ENCODE measurements at regions of chr15 and their contacts with region 1.

Region 1: DNA sequence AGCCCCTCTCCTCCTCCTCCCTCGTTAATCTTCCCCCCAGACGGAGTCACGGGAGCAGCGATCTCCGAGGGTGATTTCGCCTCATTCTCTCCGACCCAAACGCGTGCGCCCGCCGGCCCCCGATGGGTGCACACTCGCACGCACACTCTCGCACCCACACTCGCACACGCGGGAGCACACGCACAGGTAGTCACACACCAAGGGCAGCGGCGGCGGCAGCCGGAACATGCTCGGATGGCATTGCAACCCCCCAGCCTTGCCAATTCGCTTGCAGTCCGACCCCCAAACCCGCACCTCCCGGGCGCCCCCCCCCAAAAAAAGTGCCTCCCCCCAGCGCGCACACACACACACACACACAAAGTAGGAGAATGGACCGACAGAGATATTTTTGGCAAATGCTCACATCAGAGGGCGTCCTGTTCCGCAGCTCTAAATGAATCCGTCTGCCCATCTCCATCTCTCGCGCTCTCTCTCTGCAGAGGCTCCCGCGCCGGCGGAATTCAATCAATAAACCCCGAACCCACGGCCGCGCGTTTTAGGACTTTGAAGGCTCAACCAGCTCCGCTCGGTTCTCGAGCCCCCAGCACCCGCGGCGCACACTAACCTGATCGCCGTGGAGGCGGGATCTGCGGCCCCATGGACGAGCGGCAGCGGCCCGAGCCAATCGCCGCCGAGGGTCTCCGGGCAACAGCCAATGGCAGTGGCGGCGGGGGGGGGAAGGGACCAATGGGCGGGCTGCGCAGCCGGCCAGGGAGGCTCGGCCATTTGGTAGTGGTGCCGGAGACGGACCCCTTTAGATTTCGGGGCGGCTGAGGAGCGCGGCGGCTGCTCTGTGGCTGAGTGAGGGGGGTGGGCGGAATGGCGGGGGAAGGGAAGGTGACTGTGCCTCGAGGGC is at the start of gene ANP32A:
- DNase-seq: peak; percentile 96 to 99 (median 97)
- ATAC-seq: peak; percentile 62
- H3K4me3 ChIP-seq: peak within 1 kb of the TSS; percentile 81 to 98
- H3K4me3 Mint-ChIP-seq: peak within 1 kb of the TSS; percentile 95
- H3K27ac ChIP-seq: peak within 1 kb of the TSS; percentile 59 to 74
- H3K27ac Mint-ChIP-seq: peak within 1 kb of the TSS; percentile 97
- H3K4me1 ChIP-seq: peaks cover 28% of the 10 kb centered on the region
- H3K4me1 Mint-ChIP-seq: peaks cover 31% of the 10 kb centered on the region
- H3K27me3 ChIP-seq: no peaks in the 10 kb centered on the region
- H3K27me3 Mint-ChIP-seq: no peaks in the 10 kb centered on the region
- CTCF ChIP-seq: no peak
- total RNA-seq, gene ANP32A: 47.6 to 51.9 TPM

Region 2: GRCh38 chr15:67542420-67543347 is 1277.9 kb before region 1 on chr15 and contains the start of gene MAP2K5:
- CTCF ChIA-PET with region 1: no interaction called
- POLR2A ChIA-PET with region 1: no interaction called
- intact Hi-C with region 1: loop called in 1 of 2 experiments (anchors 5 kb)
- DNase-seq: peak; percentile 57 to 91 (median 82)
- ATAC-seq: peak; percentile 71
- H3K4me3 ChIP-seq: peak within 1 kb of the TSS; percentile 91 to 93
- H3K4me3 Mint-ChIP-seq: peak within 1 kb of the TSS; percentile 97
- H3K27ac ChIP-seq: peak within 1 kb of the TSS; percentile 81 to 86
- H3K27ac Mint-ChIP-seq: peak within 1 kb of the TSS; percentile 99
- H3K4me1 ChIP-seq: peaks cover 24% of the 10 kb centered on the region
- H3K4me1 Mint-ChIP-seq: peaks cover 56% of the 10 kb centered on the region
- H3K27me3 ChIP-seq: no peaks in the 10 kb centered on the region
- H3K27me3 Mint-ChIP-seq: no peaks in the 10 kb centered on the region
- CTCF ChIP-seq: no peak
- total RNA-seq, gene MAP2K5: 20.5 to 21.2 TPM

Region 3: DNA sequence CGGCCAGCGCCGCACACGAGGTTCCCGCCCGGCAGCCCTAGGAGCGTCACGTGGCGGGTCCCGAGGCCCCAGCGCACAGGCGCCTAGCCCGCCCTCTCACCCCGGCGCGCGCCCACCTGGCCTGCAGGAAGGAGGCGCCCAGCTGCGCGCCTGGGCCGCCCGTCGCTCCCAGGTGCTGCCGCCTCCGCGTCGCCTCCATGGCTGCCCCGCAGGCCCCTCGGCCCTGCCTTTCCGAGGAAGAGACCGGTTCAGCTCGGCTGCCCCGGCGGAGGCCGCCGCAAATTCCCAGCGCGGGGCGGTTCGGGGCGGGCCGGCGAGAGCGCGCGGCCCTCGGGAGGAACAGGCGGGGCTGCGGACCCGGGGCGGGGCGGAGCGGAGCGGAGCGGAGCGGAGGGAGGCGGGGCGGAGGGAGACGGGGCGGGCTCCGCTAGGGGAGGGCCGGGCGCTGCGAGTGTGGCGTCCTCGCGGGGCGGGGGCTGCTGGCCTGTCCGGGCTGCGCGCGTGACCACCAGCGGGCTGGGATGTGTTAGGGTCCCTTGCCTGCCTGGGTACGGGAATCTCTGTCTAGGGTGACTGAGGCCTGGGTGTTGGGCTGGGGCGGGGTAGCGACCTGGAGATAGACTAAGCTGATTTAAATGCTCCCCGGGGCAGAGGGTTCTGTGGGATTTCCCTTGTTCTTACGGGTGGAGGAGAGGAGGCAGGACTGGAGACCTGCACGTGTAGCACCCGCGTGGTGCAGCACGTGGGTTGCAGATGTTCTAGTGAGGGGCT is 591.0 kb before region 1 on chr15 and contains the start of gene CLN6:
- CTCF ChIA-PET with region 1: no interaction called
- POLR2A ChIA-PET with region 1: no interaction called
- intact Hi-C with region 1: loop called in 1 of 2 experiments (anchors 2 kb)
- DNase-seq: peak; percentile 55 to 91 (median 80)
- ATAC-seq: peak; percentile 87
- H3K4me3 ChIP-seq: peak within 1 kb of the TSS; percentile 86 to 90
- H3K4me3 Mint-ChIP-seq: peak within 1 kb of the TSS; percentile 93
- H3K27ac ChIP-seq: peak within 1 kb of the TSS; percentile 60 to 62
- H3K27ac Mint-ChIP-seq: peak within 1 kb of the TSS; percentile 88
- H3K4me1 ChIP-seq: peaks cover 23% of the 10 kb centered on the region
- H3K4me1 Mint-ChIP-seq: peaks cover 36% of the 10 kb centered on the region
- H3K27me3 ChIP-seq: no peaks in the 10 kb centered on the region
- H3K27me3 Mint-ChIP-seq: peaks cover 5% of the 10 kb centered on the region
- CTCF ChIP-seq: peak; percentile 27
- total RNA-seq, gene CLN6: 7.6 to 7.9 TPM

Region 4: DNA sequence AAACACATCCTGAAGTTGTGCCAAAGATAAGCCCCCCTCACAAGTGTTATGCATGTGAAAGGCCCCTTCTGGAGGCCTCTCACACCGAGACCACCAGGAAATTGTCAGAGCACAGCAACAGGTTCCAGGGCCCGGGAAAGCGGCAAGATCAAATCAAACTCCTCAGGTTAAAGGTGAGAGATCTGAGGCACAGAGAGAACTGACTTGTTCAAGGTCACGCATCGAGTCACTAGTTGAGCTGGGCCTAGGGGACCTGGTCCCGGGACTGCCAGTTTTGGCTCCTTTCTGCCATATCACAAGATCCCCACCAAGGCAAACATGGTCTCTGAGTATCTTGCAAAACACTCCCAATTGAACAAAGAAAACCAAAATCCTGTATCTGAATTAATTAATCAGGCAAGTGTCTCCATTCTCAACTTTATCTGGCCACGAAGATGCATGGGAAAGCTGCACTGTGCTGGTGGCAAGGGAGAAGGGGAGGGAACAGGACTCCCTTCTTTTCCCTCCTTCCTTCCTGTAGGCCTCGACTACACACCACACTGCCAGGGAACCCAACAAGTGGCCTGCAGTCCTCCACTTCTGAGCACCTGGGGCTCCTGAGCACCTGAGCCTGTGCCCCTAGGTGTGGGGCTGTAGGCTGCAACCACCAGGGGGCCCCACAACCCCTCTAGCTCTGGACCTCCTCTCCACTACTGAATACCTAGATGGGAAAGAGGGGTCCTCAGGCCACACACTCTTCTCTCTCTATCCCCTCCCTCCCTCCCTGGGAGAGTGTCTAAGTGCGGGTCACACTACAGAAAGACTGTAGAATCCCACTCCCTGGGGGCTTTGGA is 37.1 kb before region 1 on chr15:
- CTCF ChIA-PET with region 1: interaction called, 12 read pairs
- POLR2A ChIA-PET with region 1: interaction called, 9 read pairs
- intact Hi-C with region 1: loop called in 1 of 2 experiments (anchors 1 kb)
- DNase-seq: peak; percentile 39 to 79 (median 72)
- ATAC-seq: peak; percentile 90
- H3K4me3 ChIP-seq: no peak overlapping the region
- H3K4me3 Mint-ChIP-seq: no peak overlapping the region
- H3K27ac ChIP-seq: no peak overlapping the region
- H3K27ac Mint-ChIP-seq: peak overlapping the region; percentile 93
- H3K4me1 ChIP-seq: peaks cover 23% of the 10 kb centered on the region
- H3K4me1 Mint-ChIP-seq: peaks cover 34% of the 10 kb centered on the region
- H3K27me3 ChIP-seq: no peaks in the 10 kb centered on the region
- H3K27me3 Mint-ChIP-seq: no peaks in the 10 kb centered on the region
- CTCF ChIP-seq: peak; percentile 77

Region 5: DNA sequence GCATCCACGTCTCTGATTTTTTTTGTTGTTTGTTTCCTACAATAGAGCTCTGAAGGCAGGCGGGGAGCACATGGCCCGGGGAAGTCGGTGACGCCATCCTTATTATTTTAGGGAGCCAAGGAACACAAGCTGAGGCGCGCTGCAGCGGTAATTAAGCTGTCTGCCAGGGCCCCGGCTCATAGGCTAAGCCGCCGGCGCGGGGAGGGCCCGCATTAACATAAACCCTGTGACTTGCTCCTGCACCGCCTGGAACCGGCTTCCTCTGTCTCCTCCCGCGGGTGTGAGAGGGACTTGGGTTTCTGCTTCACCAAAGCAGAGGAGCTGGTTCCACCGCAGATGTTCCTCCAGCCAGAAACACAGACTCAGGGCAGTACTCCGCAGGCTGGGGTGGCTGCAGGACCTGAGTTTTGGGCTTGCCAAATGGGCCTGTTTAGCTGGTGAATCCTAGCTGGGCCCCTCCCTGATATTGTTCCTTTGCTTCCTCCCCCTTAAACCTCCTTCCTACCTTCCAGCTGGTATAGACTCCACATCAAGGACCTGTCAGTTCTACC is 25.2 kb before region 1 on chr15:
- CTCF ChIA-PET with region 1: interaction called, 5 read pairs
- POLR2A ChIA-PET with region 1: interaction called, 38 read pairs
- intact Hi-C with region 1: loop called (anchors 1 kb)
- DNase-seq: peak in 8 of 9 experiments; percentile 33 to 77 (median 66)
- ATAC-seq: peak; percentile 59
- H3K4me3 ChIP-seq: peak overlapping the region; percentile 4 to 10
- H3K4me3 Mint-ChIP-seq: peak overlapping the region; percentile 59
- H3K27ac ChIP-seq: peak overlapping the region; percentile 22 to 59
- H3K27ac Mint-ChIP-seq: peak overlapping the region; percentile 88
- H3K4me1 ChIP-seq: peaks cover 83% of the 10 kb centered on the region
- H3K4me1 Mint-ChIP-seq: peaks cover 96% of the 10 kb centered on the region
- H3K27me3 ChIP-seq: no peaks in the 10 kb centered on the region
- H3K27me3 Mint-ChIP-seq: no peaks in the 10 kb centered on the region
- CTCF ChIP-seq: no peak

Region 6: GRCh38 chr15:69452692-69453521 is 632.4 kb after region 1 on chr15 and contains the start of gene RPLP1:
- CTCF ChIA-PET with region 1: no interaction called
- POLR2A ChIA-PET with region 1: no interaction called
- intact Hi-C with region 1: loop called in 1 of 2 experiments (anchors 5 kb)
- DNase-seq: peak; percentile 91 to 97 (median 95)
- ATAC-seq: peak; percentile 88
- H3K4me3 ChIP-seq: peak within 1 kb of the TSS; percentile 86 to 91
- H3K4me3 Mint-ChIP-seq: peak within 1 kb of the TSS; percentile 97
- H3K27ac ChIP-seq: peak within 1 kb of the TSS; percentile 75 to 92
- H3K27ac Mint-ChIP-seq: peak within 1 kb of the TSS; percentile 99
- H3K4me1 ChIP-seq: peaks cover 32% of the 10 kb centered on the region
- H3K4me1 Mint-ChIP-seq: peaks cover 47% of the 10 kb centered on the region
- H3K27me3 ChIP-seq: no peaks in the 10 kb centered on the region
- H3K27me3 Mint-ChIP-seq: no peaks in the 10 kb centered on the region
- CTCF ChIP-seq: no peak
- total RNA-seq, gene RPLP1: 2,675 to 2,824 TPM

Region 7: GRCh38 chr15:69462493-69463181 is 642.1 kb after region 1 on chr15:
- CTCF ChIA-PET with region 1: no interaction called
- POLR2A ChIA-PET with region 1: no interaction called
- intact Hi-C with region 1: loop called in 1 of 2 experiments (anchors 10 kb)
- DNase-seq: peak; percentile 84 to 96 (median 93)
- ATAC-seq: peak; percentile 97
- H3K4me3 ChIP-seq: peak overlapping the region; percentile 69 to 72
- H3K4me3 Mint-ChIP-seq: peak overlapping the region; percentile 91
- H3K27ac ChIP-seq: peak overlapping the region; percentile 66 to 70
- H3K27ac Mint-ChIP-seq: peak overlapping the region; percentile 93
- H3K4me1 ChIP-seq: peaks cover 21% of the 10 kb centered on the region
- H3K4me1 Mint-ChIP-seq: peaks cover 26% of the 10 kb centered on the region
- H3K27me3 ChIP-seq: no peaks in the 10 kb centered on the region
- H3K27me3 Mint-ChIP-seq: no peaks in the 10 kb centered on the region
- CTCF ChIP-seq: peak; percentile 81